ENCODE measurements at regions of chr14 and their contacts with region 1.

Region 1: GRCh38 chr14:103391048-103391447 is 5.8 kb downstream of the MARK3 start:
- DNase-seq: peak in 2 of 4 experiments; percentile 19 to 47
- ATAC-seq: peak; percentile 24
- H3K4me3 ChIP-seq: no peak overlapping the region
- H3K27ac ChIP-seq: no peak overlapping the region
- H3K4me1 ChIP-seq: peaks cover 12 to 24% of the 10 kb centered on the region in 2 experiments
- H3K27me3 ChIP-seq: no peaks in the 10 kb centered on the region
- CTCF ChIP-seq: peak; percentile 75 to 92 (median 83)
- EP300 ChIP-seq: no peak
- POLR2A ChIP-seq: no peak
- RAD21 ChIP-seq: peak; percentile 45 to 62; a peak in 3 of 4 replicates

Region 2: GRCh38 chr14:103346286-103346685 is 44.8 kb before region 1 on chr14:
- CTCF ChIA-PET with region 1: no interaction called
- POLR2A ChIA-PET with region 1: interaction called, 7 read pairs
- in situ Hi-C with region 1: no loop called
- intact Hi-C with region 1: loop called (anchors 2 kb)
- DNase-seq: no peak
- ATAC-seq: no peak
- H3K4me3 ChIP-seq: no peak overlapping the region
- H3K27ac ChIP-seq: no peak overlapping the region
- H3K4me1 ChIP-seq: peaks cover 0 to 5% of the 10 kb centered on the region in 2 experiments; a peak in 3 of 5 replicates
- H3K27me3 ChIP-seq: no peaks in the 10 kb centered on the region
- CTCF ChIP-seq: no peak
- EP300 ChIP-seq: no peak
- POLR2A ChIP-seq: no peak
- RAD21 ChIP-seq: no peak

Region 3: DNA sequence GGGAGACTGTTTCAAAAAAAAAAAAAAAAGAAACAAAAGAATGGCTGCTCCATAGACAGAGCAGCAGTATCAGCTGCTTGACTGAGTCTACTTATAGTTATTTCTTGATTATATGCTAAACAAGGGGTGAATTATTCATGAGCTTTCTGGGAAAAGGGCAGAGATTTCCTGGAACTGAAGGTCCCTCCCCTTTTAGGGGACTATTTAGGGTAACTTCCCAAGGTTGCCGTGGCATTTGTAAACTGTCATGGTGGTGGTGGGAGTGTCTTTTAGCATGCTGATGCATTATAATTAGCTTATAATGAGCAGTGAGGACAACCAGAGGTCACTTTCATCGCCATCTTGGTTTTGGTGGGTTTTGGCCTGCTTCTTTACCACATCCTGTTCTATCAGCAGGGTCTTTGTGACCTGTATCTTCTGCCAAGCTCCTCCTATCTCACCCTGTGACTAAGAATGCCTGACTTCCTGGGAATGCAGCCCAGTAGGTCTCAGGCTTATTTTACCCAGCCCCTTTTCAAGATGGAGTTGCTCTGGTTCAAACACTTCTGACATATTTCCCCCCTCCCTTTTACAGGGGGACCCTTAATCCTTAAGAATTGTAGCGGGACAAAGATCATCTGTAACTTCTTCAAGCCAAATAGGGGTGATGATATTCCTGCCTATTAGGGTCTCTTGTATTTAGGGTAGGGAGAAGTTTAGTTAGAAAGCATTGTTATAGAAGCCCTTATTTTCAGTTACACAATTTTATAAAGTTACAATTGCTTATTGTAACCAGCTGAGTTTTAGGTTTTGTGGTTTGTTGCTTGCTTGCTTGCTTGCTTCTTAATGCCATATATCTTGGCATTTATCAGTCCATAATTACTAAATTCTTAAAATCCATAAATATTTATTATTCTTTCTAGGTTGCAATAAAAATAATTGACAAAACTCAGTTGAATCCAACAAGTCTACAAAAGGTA is 36.7 kb after region 1 on chr14:
- CTCF ChIA-PET with region 1: no interaction called
- POLR2A ChIA-PET with region 1: no interaction called
- in situ Hi-C with region 1: no loop called
- intact Hi-C with region 1: loop called (anchors 5 kb)
- DNase-seq: peak; percentile 31 to 92 (median 50)
- ATAC-seq: peak; percentile 87
- H3K4me3 ChIP-seq: no peak overlapping the region
- H3K27ac ChIP-seq: peak overlapping the region; percentile 79
- H3K4me1 ChIP-seq: peaks cover 3 to 30% of the 10 kb centered on the region in 2 experiments
- H3K27me3 ChIP-seq: no peaks in the 10 kb centered on the region
- CTCF ChIP-seq: no peak
- EP300 ChIP-seq: peak; percentile 50; the same call in 1 of the 2 replicates
- POLR2A ChIP-seq: peak; percentile 50; the same call in 1 of the 2 replicates
- RAD21 ChIP-seq: peak in 1 of 2 experiments; percentile 61; a peak in 2 of 4 replicates

Region 4: GRCh38 chr14:103528587-103529382 is 137.7 kb after region 1 on chr14 and contains the start of gene TRMT61A:
- CTCF ChIA-PET with region 1: no interaction called
- POLR2A ChIA-PET with region 1: no interaction called
- in situ Hi-C with region 1: no loop called
- intact Hi-C with region 1: loop called (anchors 10 kb)
- DNase-seq: peak; percentile 85 to 95 (median 88)
- ATAC-seq: peak; percentile 91
- H3K4me3 ChIP-seq: peak within 1 kb of the TSS; percentile 92
- H3K27ac ChIP-seq: peak within 1 kb of the TSS; percentile 86
- H3K4me1 ChIP-seq: peaks cover 21 to 79% of the 10 kb centered on the region in 2 experiments; a peak in 4 of 5 replicates
- H3K27me3 ChIP-seq: no peaks in the 10 kb centered on the region
- CTCF ChIP-seq: no peak
- EP300 ChIP-seq: no peak
- POLR2A ChIP-seq: peak; percentile 43; the same call in 1 of the 2 replicates
- RAD21 ChIP-seq: no peak
- polyA plus RNA-seq, gene TRMT61A: 0.10 to 0.50 TPM

Measured in K562 (cell line).